ENCODE measurements at regions of chr5 and their contacts with region 1.

Region 1: DNA sequence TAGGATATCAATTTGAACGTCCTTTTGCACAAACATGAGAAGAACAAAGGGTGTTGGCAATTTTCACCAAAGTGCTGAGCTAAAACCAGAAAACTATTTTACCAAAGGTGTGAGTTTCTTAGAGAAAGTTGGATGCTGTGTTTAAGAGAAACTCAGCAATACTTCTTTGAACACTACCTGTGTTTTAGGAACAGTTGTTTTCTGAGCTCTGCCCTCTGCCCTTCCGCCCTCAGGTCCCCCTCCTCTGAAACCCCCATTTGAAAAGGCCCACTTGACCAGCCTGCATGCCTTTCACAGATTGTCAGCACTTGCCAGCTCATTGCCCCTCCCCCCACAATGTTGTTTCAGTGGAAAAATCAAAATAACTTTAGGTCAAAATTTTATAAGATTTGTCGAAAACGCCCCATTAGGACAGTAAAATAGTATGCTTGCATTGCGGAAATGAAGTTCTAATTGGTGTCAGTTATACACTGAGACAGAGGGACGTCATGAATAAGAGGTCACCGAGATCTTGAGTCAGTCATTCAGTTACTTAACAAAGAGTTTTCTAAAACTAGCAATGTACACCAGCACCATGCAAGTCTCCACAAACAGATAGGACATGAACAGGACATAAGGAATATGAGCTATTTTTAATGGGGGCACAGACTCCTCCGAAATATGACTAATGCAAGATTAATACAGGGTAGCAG is 61.9 kb upstream of the IL7R start:
- DNase-seq: no peak
- H3K4me3 Mint-ChIP-seq: peak overlapping the region; percentile 31
- H3K27ac Mint-ChIP-seq: peak overlapping the region; percentile 89
- H3K4me1 Mint-ChIP-seq: peaks cover 86% of the 10 kb centered on the region
- H3K27me3 Mint-ChIP-seq: no peaks in the 10 kb centered on the region

Region 2: DNA sequence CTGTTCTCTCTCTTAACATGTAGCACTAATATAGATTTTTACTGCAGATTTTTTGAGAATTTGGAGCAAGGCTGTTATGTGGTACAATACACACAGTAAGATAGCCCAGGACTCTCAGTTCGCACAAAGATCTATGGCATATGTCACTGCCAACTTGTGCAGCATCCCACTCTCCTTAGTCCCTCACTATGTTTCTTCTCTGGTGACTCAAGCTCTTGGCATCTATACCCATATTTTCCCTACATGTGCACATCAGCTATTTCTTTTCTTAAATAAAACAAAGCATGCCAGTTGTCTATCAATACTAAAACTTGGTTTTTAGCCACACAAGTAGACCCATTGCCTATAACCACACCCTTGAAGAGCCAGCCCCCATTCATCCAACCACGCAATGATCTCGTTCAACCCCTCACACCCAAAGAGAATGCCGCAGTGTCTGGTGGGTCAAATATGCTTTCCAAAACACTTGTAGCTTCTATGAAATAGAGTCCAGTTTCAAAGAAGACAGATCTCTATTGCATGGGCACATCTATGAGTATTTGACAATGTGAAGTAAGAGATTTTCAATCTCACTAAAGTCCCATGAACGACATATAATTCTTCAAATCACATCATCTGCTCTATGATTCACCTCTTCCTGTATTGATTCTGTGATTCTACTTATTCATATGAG is 43.7 kb after region 1 on chr5:
- CTCF ChIA-PET with region 1: no interaction called
- POLR2A ChIA-PET with region 1: interaction called, 12 read pairs
- intact Hi-C with region 1: loop called (anchors 1 kb)
- DNase-seq: peak; percentile 76
- H3K4me3 Mint-ChIP-seq: peak overlapping the region; percentile 50
- H3K27ac Mint-ChIP-seq: peak overlapping the region; percentile 96
- H3K4me1 Mint-ChIP-seq: peaks cover 70% of the 10 kb centered on the region
- H3K27me3 Mint-ChIP-seq: no peaks in the 10 kb centered on the region

Region 3: GRCh38 chr5:36701085-36701698 is 906.4 kb after region 1 on chr5:
- CTCF ChIA-PET with region 1: no interaction called
- POLR2A ChIA-PET with region 1: no interaction called
- intact Hi-C with region 1: no loop called
- DNase-seq: no peak
- H3K4me3 Mint-ChIP-seq: no peak overlapping the region
- H3K27ac Mint-ChIP-seq: no peak overlapping the region
- H3K4me1 Mint-ChIP-seq: no peaks in the 10 kb centered on the region
- H3K27me3 Mint-ChIP-seq: peaks cover 13% of the 10 kb centered on the region

Measured in activated CD4-positive, alpha-beta memory T cell treated with anti-CD3 and anti-CD28 coated beads for 36 hours (primary cell).